ENCODE measurements at regions of chr1 and their contacts with region 1.

Region 1: DNA sequence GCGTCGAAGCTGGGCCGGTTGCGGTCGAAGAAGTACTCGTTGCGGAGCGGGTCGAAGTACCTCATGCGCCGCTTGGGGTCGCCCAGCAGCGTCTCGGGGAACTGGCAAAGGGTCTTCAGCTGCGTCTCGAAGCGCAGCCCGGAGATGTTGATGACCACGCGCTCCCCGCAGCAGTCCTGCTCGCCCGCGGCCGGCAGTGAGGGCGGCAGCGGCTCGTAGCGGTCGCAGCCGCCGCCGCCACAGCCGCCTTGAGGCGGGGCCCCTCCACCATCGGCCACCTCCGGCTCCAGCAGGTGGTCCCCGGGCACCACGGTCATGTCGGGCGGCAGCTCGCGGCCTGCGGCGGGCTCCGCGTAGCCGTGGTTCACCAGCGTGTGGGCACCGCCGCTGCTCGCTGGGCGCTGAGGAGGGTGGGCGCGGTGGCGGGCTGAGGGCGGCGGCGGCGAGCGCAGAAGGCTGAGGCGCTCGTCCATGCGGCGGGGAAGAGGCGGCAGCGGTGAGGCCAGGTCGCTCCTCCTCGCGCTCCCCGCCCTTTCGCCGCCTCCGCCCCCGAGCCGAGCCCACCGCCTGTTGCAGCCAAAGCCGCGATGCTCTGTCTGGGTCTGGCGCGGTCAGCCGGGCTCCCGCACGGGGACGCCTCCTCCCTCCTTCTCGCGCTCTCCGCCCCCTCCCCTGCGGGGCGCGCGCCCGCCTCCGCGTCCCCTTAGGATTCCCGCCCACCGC is at the start of gene KCNA3:
- DNase-seq: peak; percentile 52 to 74 (median 63)
- ATAC-seq: peak; percentile 54
- H3K4me3 ChIP-seq: peak within 1 kb of the TSS; percentile 97
- H3K4me3 Mint-ChIP-seq: peak within 1 kb of the TSS; percentile 55 to 100 (median 99)
- H3K27ac ChIP-seq: peak within 1 kb of the TSS; percentile 88
- H3K27ac Mint-ChIP-seq: peak within 1 kb of the TSS; percentile 93 to 100 (median 100)
- H3K4me1 ChIP-seq: peaks cover 5% of the 10 kb centered on the region in 2 donors
- H3K4me1 Mint-ChIP-seq: peaks cover 27 to 60% (median 55%) of the 10 kb centered on the region in 7 donors
- H3K27me3 ChIP-seq: no peaks in the 10 kb centered on the region
- H3K27me3 Mint-ChIP-seq: peaks cover 0 to 2% (median 0%) of the 10 kb centered on the region in 5 donors
- total RNA-seq, gene KCNA3: 74.1 to 115 (median 108) TPM

Region 2: GRCh38 chr1:110209715-110210603 is 464.5 kb before region 1 on chr1 and contains the start of gene KCNC4:
- CTCF ChIA-PET with region 1: no interaction called
- POLR2A ChIA-PET with region 1: no interaction called
- intact Hi-C with region 1: no loop called
- DNase-seq: peak; percentile 80 to 93 (median 91)
- ATAC-seq: peak; percentile 93
- H3K4me3 ChIP-seq: peak within 1 kb of the TSS; percentile 72
- H3K4me3 Mint-ChIP-seq: peak within 1 kb of the TSS; percentile 86 to 94 (median 88)
- H3K27ac ChIP-seq: peak within 1 kb of the TSS; percentile 89
- H3K27ac Mint-ChIP-seq: peak within 1 kb of the TSS; percentile 88 to 98 (median 95)
- H3K4me1 ChIP-seq: peaks cover 7 to 20% of the 10 kb centered on the region in 2 donors
- H3K4me1 Mint-ChIP-seq: peaks cover 31 to 61% (median 42%) of the 10 kb centered on the region in 7 donors
- H3K27me3 ChIP-seq: no peaks in the 10 kb centered on the region
- H3K27me3 Mint-ChIP-seq: peaks cover 0 to 16% (median 0%) of the 10 kb centered on the region in 5 donors
- total RNA-seq, gene KCNC4: 5.8 to 18.2 (median 12.4) TPM

Region 3: DNA sequence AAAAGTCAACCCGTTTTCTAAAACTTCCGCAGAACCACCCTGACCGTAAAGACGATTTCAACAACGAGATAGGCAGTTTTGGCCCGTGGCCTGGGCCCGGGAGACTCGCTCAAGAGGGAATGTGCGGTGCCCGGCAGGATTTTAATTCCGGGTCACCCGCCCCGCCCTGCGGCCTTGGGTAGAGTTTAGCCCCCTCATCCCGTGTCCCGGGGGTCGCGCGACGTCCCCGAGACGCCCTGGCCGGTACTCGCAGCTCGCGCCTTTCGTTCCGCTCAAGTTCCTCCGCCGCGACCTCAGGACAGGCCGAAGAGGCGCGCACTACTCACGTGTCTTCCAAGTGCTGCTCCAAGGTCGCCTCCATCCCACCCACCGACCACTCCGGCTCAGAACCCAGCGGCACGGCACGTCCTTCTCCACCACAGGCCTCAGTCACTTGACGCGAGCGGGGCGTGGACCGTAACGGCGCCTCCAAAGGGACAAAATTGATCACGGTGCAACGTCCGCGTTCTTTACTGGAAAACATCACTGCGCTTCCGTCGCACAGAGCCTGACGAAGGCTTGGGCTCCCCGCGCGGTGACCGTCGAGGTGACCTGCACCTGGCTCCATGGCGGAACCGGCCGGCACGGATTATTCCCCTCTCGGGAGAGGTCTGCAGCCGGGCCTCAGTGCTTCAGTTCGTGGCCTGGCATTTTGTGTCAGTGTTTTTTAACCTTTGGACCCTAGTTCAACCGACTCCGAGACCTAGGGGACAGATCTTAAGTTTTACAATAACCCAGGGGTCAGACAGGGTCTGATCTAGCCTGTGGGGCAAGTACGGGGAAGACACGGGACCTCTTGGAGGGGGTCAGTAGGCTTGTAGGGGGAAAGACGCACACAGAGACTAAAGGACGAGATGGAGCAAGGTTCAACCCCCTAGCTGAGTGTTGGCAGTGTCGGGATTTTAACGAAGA is 267.0 kb before region 1 on chr1 and contains the start of gene LAMTOR5:
- CTCF ChIA-PET with region 1: no interaction called
- POLR2A ChIA-PET with region 1: no interaction called
- intact Hi-C with region 1: loop called (anchors 2 to 5 kb)
- DNase-seq: peak; percentile 77 to 91 (median 89)
- ATAC-seq: peak; percentile 98
- H3K4me3 ChIP-seq: peak within 1 kb of the TSS; percentile 95
- H3K4me3 Mint-ChIP-seq: peak within 1 kb of the TSS; percentile 88 to 100 (median 99)
- H3K27ac ChIP-seq: peak within 1 kb of the TSS; percentile 92
- H3K27ac Mint-ChIP-seq: peak within 1 kb of the TSS; percentile 96 to 100 (median 99)
- H3K4me1 ChIP-seq: peaks cover 19% of the 10 kb centered on the region in 2 donors
- H3K4me1 Mint-ChIP-seq: peaks cover 9 to 39% (median 27%) of the 10 kb centered on the region in 7 donors
- H3K27me3 ChIP-seq: no peaks in the 10 kb centered on the region
- H3K27me3 Mint-ChIP-seq: no peaks in the 10 kb centered on the region
- total RNA-seq, gene LAMTOR5: 63.3 to 146 (median 69.4) TPM

Region 4: GRCh38 chr1:110639724-110640386 is 34.6 kb before region 1 on chr1:
- CTCF ChIA-PET with region 1: interaction called, 13 read pairs
- POLR2A ChIA-PET with region 1: interaction called, 121 read pairs
- intact Hi-C with region 1: no loop called
- DNase-seq: no peak
- ATAC-seq: peak; percentile 65
- H3K4me3 ChIP-seq: no peak overlapping the region
- H3K4me3 Mint-ChIP-seq: peak overlapping the region in 8 of 10 donors; percentile 1 to 46 (median 8)
- H3K27ac ChIP-seq: peak overlapping the region; percentile 13
- H3K27ac Mint-ChIP-seq: peak overlapping the region in 7 of 9 donors; percentile 56 to 92 (median 86)
- H3K4me1 ChIP-seq: peaks cover 81 to 98% of the 10 kb centered on the region in 2 donors
- H3K4me1 Mint-ChIP-seq: peaks cover 64 to 97% (median 85%) of the 10 kb centered on the region in 7 donors
- H3K27me3 ChIP-seq: no peaks in the 10 kb centered on the region
- H3K27me3 Mint-ChIP-seq: no peaks in the 10 kb centered on the region

Region 5: GRCh38 chr1:110663241-110663640 is 11.3 kb before region 1 on chr1:
- CTCF ChIA-PET with region 1: interaction called, 3 read pairs
- POLR2A ChIA-PET with region 1: interaction called, 23 read pairs
- intact Hi-C with region 1: loop called in 1 of 2 experiments (anchors 1 kb)
- DNase-seq: no peak
- ATAC-seq: no peak
- H3K4me3 ChIP-seq: no peak overlapping the region
- H3K4me3 Mint-ChIP-seq: peak overlapping the region in 2 of 10 donors; percentile 12 to 20
- H3K27ac ChIP-seq: no peak overlapping the region
- H3K27ac Mint-ChIP-seq: peak overlapping the region in 5 of 9 donors; percentile 19 to 79 (median 63)
- H3K4me1 ChIP-seq: peaks cover 24 to 46% of the 10 kb centered on the region in 2 donors
- H3K4me1 Mint-ChIP-seq: peaks cover 11 to 36% (median 20%) of the 10 kb centered on the region in 7 donors
- H3K27me3 ChIP-seq: no peaks in the 10 kb centered on the region
- H3K27me3 Mint-ChIP-seq: no peaks in the 10 kb centered on the region

Region 6: GRCh38 chr1:110780600-110781484 is 106.3 kb after region 1 on chr1:
- CTCF ChIA-PET with region 1: interaction called, 3 read pairs
- POLR2A ChIA-PET with region 1: interaction called, 3 read pairs
- intact Hi-C with region 1: loop called in 1 of 2 experiments (anchors 5 kb)
- DNase-seq: peak; percentile 48 to 83 (median 74)
- ATAC-seq: peak; percentile 88
- H3K4me3 ChIP-seq: no peak overlapping the region
- H3K4me3 Mint-ChIP-seq: peak overlapping the region in 5 of 10 donors; percentile 29 to 61 (median 42)
- H3K27ac ChIP-seq: no peak overlapping the region
- H3K27ac Mint-ChIP-seq: peak overlapping the region in 5 of 9 donors; percentile 2 to 82 (median 34)
- H3K4me1 ChIP-seq: peaks cover 31 to 40% of the 10 kb centered on the region in 2 donors
- H3K4me1 Mint-ChIP-seq: peaks cover 18 to 54% (median 45%) of the 10 kb centered on the region in 7 donors
- H3K27me3 ChIP-seq: no peaks in the 10 kb centered on the region
- H3K27me3 Mint-ChIP-seq: peaks cover 0 to 28% (median 0%) of the 10 kb centered on the region in 5 donors

Region 7: DNA sequence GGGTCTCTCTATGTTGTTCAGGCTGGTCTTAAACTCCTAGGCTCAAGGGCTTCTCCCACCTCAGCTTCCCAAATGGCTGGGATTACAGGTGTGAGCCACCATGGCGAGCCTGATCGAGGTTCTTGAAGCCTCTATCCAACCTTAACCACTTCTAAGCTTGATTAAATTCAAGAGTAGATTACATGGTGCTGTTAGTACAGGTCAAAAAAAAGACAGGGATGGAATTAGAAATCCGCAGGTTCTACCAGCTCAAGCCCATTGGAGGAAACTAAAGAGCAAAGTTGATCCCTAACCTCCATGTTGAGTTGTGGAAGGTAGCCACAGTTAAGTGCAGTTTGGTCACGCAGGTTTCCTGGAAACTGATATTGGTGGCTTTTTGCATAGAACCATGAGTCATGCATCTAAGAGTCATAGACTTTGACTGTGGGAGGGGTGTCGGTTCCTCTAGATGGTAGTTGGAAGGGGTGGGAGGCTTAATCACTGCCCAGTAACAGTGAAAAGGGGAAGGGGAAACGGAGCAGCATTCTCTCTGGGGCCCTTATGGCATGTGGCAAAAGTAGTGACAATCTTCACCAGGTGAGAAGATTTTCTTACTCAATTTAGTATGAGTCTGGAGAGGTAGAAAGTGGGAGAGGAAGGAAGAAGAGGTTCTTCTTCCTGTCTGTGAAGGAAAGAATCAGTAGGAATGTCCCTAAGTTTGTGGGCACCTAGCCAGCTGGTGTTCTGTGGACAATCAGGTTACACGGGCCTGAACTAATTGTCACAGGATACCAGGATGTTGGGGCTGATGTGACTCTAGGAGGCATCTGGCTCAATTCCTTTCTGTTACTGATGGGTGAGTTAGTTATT is 205.5 kb after region 1 on chr1:
- CTCF ChIA-PET with region 1: no interaction called
- POLR2A ChIA-PET with region 1: interaction called, 7 read pairs
- intact Hi-C with region 1: loop called in 1 of 2 experiments (anchors 1 kb)
- DNase-seq: peak in 2 of 9 donors; percentile 63 to 65
- ATAC-seq: peak; percentile 73
- H3K4me3 ChIP-seq: peak overlapping the region; percentile 41
- H3K4me3 Mint-ChIP-seq: peak overlapping the region; percentile 78 to 96 (median 88)
- H3K27ac ChIP-seq: peak overlapping the region; percentile 44
- H3K27ac Mint-ChIP-seq: peak overlapping the region; percentile 89 to 99 (median 93)
- H3K4me1 ChIP-seq: peaks cover 69 to 77% of the 10 kb centered on the region in 2 donors
- H3K4me1 Mint-ChIP-seq: peaks cover 71 to 96% (median 85%) of the 10 kb centered on the region in 7 donors
- H3K27me3 ChIP-seq: no peaks in the 10 kb centered on the region
- H3K27me3 Mint-ChIP-seq: no peaks in the 10 kb centered on the region

Region 8: GRCh38 chr1:111203681-111204200 is 529.2 kb after region 1 on chr1:
- CTCF ChIA-PET with region 1: no interaction called
- POLR2A ChIA-PET with region 1: interaction called, 3 read pairs
- intact Hi-C with region 1: loop called in 1 of 2 experiments (anchors 5 kb)
- DNase-seq: peak; percentile 51 to 86 (median 82)
- ATAC-seq: peak; percentile 71
- H3K4me3 ChIP-seq: peak overlapping the region; percentile 84
- H3K4me3 Mint-ChIP-seq: peak overlapping the region; percentile 90 to 100 (median 99)
- H3K27ac ChIP-seq: peak overlapping the region; percentile 90
- H3K27ac Mint-ChIP-seq: peak overlapping the region; percentile 80 to 99 (median 96)
- H3K4me1 ChIP-seq: peaks cover 30 to 32% of the 10 kb centered on the region in 2 donors
- H3K4me1 Mint-ChIP-seq: peaks cover 32 to 76% (median 61%) of the 10 kb centered on the region in 7 donors
- H3K27me3 ChIP-seq: no peaks in the 10 kb centered on the region
- H3K27me3 Mint-ChIP-seq: no peaks in the 10 kb centered on the region

Measured in naive thymus-derived CD4-positive, alpha-beta T cell (primary cell).